ENCODE measurements at regions of chr6 and their contacts with region 1.

Region 1: DNA sequence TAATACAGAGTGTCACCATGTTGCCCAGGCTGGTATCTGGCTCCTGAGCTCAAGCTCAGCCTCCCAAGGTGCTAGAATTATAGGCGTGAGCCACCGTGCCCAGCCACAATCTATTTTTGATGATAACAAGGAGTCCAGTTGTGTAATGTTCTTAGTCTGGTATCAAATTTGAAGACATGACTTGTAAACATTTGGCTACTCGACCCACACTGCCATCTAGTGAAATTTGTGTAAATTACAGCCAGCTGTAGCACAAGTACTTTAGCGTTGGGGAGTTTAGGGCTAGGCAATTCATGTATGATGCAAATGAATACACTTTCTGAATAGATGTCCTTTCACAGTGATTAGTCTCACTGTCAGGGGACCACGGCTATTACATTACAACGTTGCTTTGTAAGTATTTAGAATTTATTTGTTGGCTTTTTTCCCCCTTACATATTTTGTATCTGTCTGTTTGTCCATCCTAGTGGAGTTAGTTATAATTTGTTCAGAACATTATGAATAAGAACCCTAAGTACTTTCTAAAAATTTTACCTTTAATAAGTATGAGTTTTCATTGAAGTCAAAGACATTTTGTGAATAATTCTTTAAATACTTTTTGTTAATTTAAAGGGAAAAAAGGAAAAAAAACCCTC is 139.7 kb downstream of the PRDM13 start:
- H3K4me3 Mint-ChIP-seq: no peak overlapping the region
- H3K27ac Mint-ChIP-seq: no peak overlapping the region
- H3K4me1 Mint-ChIP-seq: no peaks in the 10 kb centered on the region
- H3K27me3 Mint-ChIP-seq: peaks cover 11% of the 10 kb centered on the region

Region 2: DNA sequence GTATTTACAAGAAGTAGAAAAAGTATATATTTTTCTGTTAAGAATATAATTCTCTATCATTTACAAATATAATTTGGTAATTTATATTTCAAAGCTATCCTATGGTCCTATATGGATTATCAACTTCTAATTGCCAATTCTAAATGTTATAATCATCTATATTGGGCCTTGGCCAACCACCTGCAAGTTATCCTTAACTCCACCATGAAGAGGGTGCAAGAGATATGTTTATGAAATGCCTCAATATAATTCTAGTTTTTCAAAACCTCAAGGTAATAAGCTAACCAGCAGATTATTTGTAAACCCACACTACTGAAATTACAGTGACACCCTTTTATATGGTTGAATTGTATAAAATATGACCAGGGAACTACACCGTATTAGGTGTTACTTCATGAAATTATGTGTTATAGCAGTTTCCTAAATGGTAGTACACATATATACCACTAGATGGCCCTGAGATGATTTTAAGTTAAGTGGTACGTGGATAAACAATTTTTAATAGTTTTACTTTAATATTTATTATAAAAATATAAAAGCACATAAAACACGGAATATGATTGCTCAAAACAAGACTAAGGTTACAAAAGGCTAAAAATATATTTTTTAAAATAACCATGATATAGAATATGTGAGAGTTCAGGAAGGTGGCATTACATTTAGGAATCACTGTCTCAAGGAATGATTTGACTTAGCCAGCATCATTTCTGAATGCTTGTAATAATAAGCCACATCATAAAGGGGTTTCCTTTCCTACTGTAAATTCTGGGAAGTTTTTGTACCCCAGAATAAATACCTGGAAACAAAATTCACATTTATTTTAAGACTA is 311.5 kb before region 1 on chr6:
- intact Hi-C with region 1: no loop called
- H3K4me3 Mint-ChIP-seq: no peak overlapping the region
- H3K27ac Mint-ChIP-seq: no peak overlapping the region
- H3K4me1 Mint-ChIP-seq: no peaks in the 10 kb centered on the region
- H3K27me3 Mint-ChIP-seq: no peaks in the 10 kb centered on the region

Region 3: DNA sequence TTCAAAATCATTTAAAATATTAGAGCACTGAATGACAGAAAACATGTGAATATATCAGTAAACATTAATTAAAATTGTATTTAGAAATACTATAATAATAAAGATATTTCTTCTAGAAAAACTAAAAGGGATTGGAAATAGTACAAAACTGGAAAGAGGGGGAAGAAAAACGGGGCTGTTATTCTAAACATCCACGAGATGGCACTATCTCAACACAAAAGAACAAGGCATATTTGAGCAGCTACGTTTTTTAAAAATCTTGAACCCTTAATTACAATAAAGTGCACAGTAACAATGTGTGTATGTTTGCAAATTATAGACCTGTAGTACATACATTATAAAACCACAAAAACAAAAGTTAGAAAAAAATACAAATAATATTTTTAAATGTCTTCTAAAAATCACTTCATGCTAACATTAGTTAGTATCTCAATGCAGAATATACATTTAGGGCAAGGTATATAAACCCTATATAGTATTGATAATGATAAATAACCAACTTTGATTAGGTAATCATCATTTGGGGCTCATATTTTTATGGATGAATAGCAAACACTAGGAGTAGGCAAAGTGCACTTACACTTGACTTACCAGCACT is 278.8 kb before region 1 on chr6:
- intact Hi-C with region 1: loop called (anchors 1 kb)
- H3K4me3 Mint-ChIP-seq: no peak overlapping the region
- H3K27ac Mint-ChIP-seq: no peak overlapping the region
- H3K4me1 Mint-ChIP-seq: no peaks in the 10 kb centered on the region
- H3K27me3 Mint-ChIP-seq: no peaks in the 10 kb centered on the region

Region 4: GRCh38 chr6:99588618-99589289 is 157.6 kb before region 1 on chr6:
- intact Hi-C with region 1: loop called (anchors 1 kb)
- H3K4me3 Mint-ChIP-seq: peak overlapping the region; percentile 82
- H3K27ac Mint-ChIP-seq: no peak overlapping the region
- H3K4me1 Mint-ChIP-seq: peaks cover 44% of the 10 kb centered on the region
- H3K27me3 Mint-ChIP-seq: peaks cover 72% of the 10 kb centered on the region

Region 5: DNA sequence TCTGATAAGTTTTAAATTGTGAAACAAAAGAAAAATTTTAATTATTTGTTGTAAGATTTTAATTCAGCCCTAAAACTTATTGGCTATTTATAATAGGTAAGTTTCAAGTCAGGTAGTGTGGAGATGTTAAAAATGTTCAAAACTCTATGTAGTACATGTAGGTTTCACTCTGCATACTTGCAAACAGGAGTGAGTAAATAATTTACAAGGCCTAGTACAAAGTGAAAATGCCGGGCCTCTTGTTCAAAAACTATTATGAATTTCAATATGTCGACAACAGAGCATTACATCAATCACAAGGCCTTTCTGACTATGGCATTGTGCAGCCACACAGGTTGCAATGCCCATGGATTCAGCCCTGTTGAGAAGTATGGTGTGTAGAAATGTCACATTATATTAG is 1566.3 kb after region 1 on chr6:
- intact Hi-C with region 1: no loop called
- H3K4me3 Mint-ChIP-seq: no peak overlapping the region
- H3K27ac Mint-ChIP-seq: no peak overlapping the region
- H3K4me1 Mint-ChIP-seq: no peaks in the 10 kb centered on the region
- H3K27me3 Mint-ChIP-seq: no peaks in the 10 kb centered on the region

Measured in dendritic cell treated with granulocyte-macrophage colony-stimulating factor and Interleukin-4, amounts not matched to agents 40 ng/mL and 50 ng/mL, for 4 days (primary cell).